Right ventricle myocardium inferior (tissue), 1 donor: ENCODE measurements at regions of chr4 and their contacts with region 1.

Region 1: GRCh38 chr4:70839589-70840093 is at the start of gene GRSF1:
- DNase-seq: peak; percentile 97
- ATAC-seq: peak; percentile 98
- total RNA-seq, gene GRSF1: 96.8 TPM

Region 2: DNA sequence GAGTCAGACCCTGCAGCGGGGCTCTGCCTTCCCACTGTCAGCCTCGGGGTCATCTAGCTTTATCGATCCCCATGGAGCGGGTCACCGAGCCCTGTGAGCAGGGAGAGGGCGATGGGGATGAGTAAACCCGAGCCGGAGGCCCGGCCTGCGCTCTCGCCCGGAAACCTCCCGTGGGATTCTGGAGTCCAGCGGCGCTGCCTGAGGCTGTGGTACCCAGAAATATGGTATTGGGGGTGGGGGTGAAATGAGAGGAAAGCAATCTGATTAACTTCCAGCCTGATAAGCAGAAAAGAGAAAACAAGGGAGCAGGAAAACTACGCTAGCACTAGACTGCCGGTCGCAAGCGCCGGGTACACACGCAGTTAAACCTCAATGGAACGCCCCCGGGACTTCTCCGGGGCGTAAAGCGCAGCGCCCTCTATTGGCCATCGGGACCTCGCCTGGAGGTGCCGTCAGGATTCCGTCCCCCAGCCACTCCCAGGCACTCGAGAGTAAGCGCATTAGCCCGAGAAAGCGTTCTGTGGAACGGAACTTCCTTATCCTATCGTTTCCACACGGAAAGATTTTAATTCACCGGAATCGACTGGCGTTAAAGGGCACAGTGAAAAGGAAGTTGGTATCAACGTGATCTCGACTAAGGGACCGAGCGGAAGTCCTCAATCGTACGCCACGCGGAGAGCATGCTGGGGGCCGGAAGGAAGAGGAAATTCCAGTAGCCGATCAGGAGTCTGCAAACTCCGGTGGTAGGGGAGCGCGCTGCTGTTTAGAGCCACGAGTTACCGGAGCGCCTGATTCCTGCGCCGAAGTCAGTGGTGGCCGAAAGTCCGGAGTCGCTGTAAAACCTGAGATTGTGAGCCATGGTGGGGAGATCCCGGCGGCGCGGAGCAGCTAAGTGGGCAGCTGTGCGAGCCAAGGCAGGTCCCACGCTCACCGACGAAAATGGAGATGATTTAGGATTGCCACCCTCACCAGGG is 151.5 kb before region 1 on chr4 and contains the start of gene UTP3:
- intact Hi-C with region 1: loop called (anchors 1 kb)
- DNase-seq: peak; percentile 95
- ATAC-seq: peak; percentile 98
- total RNA-seq, gene UTP3: 14.8 TPM

Region 3: DNA sequence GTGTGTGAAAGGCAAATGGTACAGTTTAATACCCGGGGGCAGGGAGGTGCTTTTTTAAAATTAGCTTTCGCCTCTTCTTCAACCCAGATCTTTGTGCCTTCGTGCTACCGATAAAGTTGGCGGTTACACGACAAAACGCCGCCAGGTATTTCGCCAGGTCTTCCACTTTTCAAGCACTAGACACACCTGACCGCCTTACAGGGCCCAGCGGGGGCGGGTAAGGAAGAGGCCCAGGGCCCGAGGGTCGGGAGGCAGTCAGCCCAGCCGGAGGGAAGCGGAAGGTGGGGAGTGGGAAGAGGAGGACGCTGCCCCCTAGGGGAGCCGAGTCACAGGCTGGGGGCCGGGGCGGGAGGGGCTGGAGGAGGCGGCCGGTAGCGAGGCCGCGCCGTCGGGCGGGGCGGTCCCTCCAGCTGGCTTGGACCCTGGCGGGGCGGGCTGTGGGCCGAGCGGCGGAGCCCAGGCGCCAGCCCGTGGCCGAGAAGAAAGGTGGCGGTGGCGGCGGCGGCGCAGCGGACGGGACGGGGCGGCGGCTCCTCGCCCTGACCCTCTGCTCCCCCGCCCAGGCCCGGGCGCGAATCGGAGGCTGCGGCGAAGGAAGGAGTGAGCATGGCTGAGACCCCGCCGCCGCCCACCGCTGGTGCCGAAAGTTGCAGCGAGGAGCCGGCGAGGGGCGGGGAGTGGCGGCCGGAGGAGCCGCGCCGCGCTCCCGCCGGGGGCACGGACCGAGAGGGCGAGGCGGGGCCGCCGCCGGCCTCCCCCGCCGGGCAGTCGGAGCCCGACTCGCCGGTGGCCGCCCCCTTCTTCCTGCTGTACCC is 135.1 kb before region 1 on chr4:
- intact Hi-C with region 1: loop called (anchors 5 kb)
- DNase-seq: peak; percentile 88
- ATAC-seq: peak; percentile 89

Region 4: DNA sequence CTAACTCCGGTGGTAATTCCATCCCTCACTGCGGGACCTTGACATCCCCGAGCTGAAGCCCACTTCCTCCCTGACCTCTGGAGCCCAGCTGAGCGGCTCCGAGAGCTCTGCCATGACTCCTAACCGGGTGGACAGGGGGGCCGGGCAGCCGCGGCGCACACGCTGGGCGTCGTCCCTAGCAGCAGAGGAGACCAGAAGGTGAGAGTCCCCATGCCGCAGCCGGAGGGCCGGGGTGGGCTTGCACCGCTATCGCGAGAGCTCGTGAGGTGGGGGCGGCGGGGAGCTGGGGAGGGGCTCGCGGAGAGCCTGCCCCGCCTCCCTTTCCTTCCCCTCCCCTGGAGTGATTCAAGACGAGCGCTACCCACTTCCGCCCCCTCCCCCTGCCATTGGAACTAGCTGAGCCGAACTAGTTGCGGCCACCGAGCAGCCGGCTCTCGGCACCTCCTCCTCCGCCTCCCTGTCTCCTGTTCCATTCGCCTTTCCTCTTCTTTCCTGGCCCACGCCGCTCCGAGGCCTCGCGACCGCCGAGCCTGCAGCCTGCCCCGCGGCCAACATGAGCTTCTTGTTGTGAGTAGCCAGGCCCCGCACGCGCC is 62.4 kb after region 1 on chr4 and contains the start of gene MOB1B:
- intact Hi-C with region 1: loop called (anchors 2 kb)
- DNase-seq: peak; percentile 93
- ATAC-seq: peak; percentile 97
- total RNA-seq, gene MOB1B: 17.6 TPM

Region 5: GRCh38 chr4:70993181-70994068 is 153.8 kb after region 1 on chr4 and contains the start of gene DCK:
- intact Hi-C with region 1: loop called (anchors 2 kb)
- DNase-seq: peak; percentile 96
- ATAC-seq: peak; percentile 99
- total RNA-seq, gene DCK: 7.2 TPM